ENCODE measurements at regions of chr12 and their contacts with region 1.

Region 1: DNA sequence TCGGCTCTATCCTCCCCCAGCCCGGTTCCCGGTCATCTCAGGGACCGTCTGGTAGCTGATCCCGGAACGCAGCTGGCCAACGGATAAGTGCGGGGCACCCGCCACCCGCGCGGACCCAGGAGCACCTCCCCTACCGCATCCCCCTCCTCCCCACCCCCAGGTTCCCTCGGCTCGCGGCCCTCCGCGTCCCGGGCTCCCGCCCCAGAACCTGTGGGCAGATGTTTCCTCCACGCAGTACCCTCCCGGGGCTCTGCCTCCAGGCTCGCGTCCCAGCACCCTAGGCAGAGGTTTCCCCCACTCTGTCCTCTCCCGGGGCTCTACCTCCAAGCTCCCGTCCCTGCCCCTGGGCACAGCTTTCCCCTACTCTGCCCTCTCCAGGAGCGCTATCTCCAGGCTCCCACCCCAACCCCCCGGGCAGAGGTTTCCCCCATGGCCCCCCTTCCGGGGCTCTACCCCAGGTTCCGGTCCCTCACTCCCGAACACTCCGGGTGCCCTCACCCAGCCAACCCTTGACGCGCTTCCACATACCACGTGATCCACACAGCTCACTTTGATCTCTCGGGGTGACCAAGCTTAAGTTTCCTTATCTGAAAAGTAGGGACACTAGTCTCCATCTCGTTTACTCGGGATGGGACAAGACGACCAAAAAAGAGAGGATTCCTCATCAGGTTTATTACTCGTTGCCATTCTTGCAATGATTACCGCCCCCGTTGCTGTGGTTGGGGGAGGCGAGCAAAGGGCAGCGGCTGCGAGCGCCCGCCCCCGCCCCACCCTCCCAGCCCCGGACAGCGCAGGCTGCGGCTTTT is at the start of gene CCDC38:
- DNase-seq: peak; percentile 69 to 90 (median 80)
- H3K4me3 ChIP-seq: peak within 1 kb of the TSS; percentile 90
- H3K4me3 Mint-ChIP-seq: peak within 1 kb of the TSS; percentile 91 to 97 (median 96)
- H3K27ac ChIP-seq: peak within 1 kb of the TSS; percentile 60
- H3K27ac Mint-ChIP-seq: peak within 1 kb of the TSS; percentile 84 to 97 (median 91)
- H3K4me1 ChIP-seq: peaks cover 9% of the 10 kb centered on the region
- H3K4me1 Mint-ChIP-seq: peaks cover 9 to 14% (median 12%) of the 10 kb centered on the region in 3 donors
- H3K27me3 ChIP-seq: no peaks in the 10 kb centered on the region
- H3K27me3 Mint-ChIP-seq: peaks cover 0 to 1% of the 10 kb centered on the region in 2 donors
- total RNA-seq, gene CCDC38: 0.24 to 0.46 TPM

Region 2: GRCh38 chr12:95918194-95918993 is 24.3 kb before region 1 on chr12:
- CTCF ChIA-PET with region 1: interaction called, 11 read pairs
- POLR2A ChIA-PET with region 1: no interaction called
- DNase-seq: peak in 4 of 5 donors; percentile 16 to 63 (median 51)
- H3K4me3 ChIP-seq: no peak overlapping the region
- H3K4me3 Mint-ChIP-seq: no peak overlapping the region
- H3K27ac ChIP-seq: no peak overlapping the region
- H3K27ac Mint-ChIP-seq: no peak overlapping the region
- H3K4me1 ChIP-seq: no peaks in the 10 kb centered on the region
- H3K4me1 Mint-ChIP-seq: no peaks in the 10 kb centered on the region
- H3K27me3 ChIP-seq: no peaks in the 10 kb centered on the region
- H3K27me3 Mint-ChIP-seq: peaks cover 3% of the 10 kb centered on the region in 2 donors

Region 3: DNA sequence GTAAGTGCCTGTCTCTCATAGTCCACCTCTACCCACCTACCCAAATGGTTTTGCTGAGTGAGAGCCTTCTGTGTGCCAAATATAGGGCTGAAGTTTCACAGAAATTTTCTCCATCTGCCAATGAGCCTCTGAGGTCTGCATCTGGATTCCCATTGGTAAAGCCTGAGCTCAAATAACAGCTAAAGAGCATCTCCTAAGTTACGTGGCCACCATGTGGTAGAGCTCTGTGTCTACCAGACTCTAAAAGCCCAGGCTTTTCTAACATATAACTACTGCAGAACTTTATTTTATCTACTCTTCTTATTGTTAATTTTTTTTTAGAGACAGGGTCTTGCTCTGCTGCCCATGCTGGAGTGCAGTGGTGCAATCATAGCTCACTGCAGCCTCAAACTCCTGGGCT is 16.4 kb after region 1 on chr12:
- CTCF ChIA-PET with region 1: interaction called, 11 read pairs
- POLR2A ChIA-PET with region 1: interaction called, 7 read pairs
- DNase-seq: no peak
- H3K4me3 ChIP-seq: no peak overlapping the region
- H3K4me3 Mint-ChIP-seq: no peak overlapping the region
- H3K27ac ChIP-seq: no peak overlapping the region
- H3K27ac Mint-ChIP-seq: peak overlapping the region in 1 of 8 donors; percentile 43
- H3K4me1 ChIP-seq: no peaks in the 10 kb centered on the region
- H3K4me1 Mint-ChIP-seq: no peaks in the 10 kb centered on the region
- H3K27me3 ChIP-seq: no peaks in the 10 kb centered on the region
- H3K27me3 Mint-ChIP-seq: no peaks in the 10 kb centered on the region